Lower leg skin (tissue), 4 donors: ENCODE measurements at regions of chr2 and their contacts with region 1.

Region 1: GRCh38 chr2:28751252-28751955 is at the start of gene PPP1CB:
- DNase-seq: peak; percentile 94 to 99
- H3K4me3 ChIP-seq: peak within 1 kb of the TSS; percentile 99
- CTCF ChIP-seq: peak in 1 of 3 donors; percentile 23
- POLR2A ChIP-seq: no peak
- total RNA-seq, gene PPP1CB: 99.9 to 151 (median 119) TPM

Region 2: DNA sequence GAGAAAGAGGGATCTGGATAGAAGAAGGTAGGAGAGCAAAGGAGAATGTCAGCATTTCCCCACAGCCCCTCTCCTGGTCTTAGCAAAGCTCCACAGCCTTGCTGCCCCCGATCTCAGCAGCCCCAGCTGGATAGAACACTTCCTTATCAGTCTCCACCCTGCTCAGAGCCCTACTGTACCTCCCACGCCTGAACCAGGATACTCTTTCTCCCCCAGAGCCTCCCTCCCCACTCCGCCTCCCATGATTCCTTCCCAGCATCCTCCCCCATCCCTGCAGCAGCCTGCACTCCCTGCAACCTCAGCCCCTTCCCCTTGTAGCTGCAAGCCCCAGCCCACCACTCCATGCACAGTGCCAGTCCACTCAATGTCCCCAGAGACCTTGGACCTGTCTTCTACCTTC is 229.7 kb before region 1 on chr2:
- intact Hi-C with region 1: no loop called
- DNase-seq: peak in 1 of 2 donors; percentile 46
- H3K4me3 ChIP-seq: no peak overlapping the region
- CTCF ChIP-seq: no peak
- POLR2A ChIP-seq: no peak

Region 3: DNA sequence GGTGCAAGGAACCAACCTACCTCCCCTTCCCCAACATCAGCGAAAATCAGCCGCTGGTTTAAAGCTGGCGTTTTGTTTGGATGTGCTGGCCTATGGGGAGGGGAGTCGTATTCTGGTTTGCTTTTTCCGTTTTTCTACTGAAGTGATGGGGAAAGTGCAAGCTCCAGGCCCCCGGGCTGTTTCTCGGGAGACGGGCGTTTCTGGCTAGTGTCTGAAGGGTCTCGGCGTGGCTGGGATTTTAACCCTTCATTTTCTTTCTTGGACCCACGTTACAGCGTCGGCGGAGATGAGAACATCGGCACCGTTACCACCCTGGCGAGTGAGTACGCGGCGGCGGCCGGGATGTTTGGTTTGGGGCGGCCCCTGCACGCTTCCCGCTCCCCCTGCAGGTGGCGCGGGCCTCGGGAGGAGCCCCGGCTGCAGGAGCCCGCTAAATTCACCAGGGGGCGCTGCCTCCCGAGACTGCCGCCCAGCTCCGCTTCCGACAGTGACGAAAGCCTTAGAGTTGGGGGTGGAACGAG is 184.8 kb before region 1 on chr2:
- intact Hi-C with region 1: loop called (anchors 2 kb)
- DNase-seq: peak; percentile 77 to 97
- H3K4me3 ChIP-seq: peak overlapping the region; percentile 25
- CTCF ChIP-seq: peak in 2 of 3 donors; percentile 61 to 98
- POLR2A ChIP-seq: no peak

Region 4: DNA sequence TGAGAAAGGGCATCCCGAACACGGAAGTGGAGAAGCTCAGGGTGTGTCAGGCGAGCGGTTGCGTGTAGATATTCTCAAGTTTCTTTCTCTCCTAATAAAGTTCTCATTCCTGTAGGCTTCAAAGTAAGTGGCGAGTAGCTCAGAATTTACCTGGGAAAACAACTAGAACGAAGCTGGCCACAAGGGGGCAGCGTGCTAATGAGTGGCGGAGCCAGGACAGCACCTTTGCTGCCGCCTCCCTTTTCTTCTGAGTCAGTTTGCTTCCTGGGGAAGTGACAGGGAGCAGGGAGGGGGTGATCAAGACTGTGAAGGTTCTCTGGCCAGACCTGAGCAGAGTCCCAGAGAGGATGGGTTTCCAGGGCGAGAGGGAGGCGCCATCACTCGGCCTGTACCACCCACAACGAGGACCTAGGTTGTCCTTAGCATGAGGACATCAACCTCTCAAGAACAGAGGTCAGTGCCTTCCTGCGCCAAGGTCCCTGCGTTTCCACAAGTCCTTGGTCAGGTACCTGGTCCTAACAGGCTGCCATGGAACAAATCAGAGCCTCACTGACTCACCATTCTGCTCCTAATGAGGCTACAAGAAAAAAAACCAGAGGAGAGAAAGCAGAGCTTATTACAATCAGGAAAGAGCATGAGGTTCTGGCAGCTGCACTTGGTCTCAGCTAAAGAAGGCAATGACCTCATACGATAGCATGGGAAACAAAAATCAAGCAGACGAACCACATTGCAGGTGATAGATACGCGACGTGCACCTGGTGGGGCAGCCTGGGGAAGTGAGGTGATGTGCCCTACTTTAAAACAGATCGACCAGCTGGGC is 156.9 kb before region 1 on chr2:
- intact Hi-C with region 1: loop called (anchors 10 kb)
- DNase-seq: peak; percentile 91 to 98
- H3K4me3 ChIP-seq: no peak overlapping the region
- CTCF ChIP-seq: peak in 1 of 3 donors; percentile 62
- POLR2A ChIP-seq: no peak

Region 5: GRCh38 chr2:28894470-28895177 is 143.2 kb after region 1 on chr2 and contains the start of gene WDR43:
- intact Hi-C with region 1: no loop called
- DNase-seq: peak; percentile 96 to 99
- H3K4me3 ChIP-seq: peak within 1 kb of the TSS; percentile 96
- CTCF ChIP-seq: no peak
- POLR2A ChIP-seq: peak in 1 of 2 donors; percentile 22
- total RNA-seq, gene WDR43: 40.8 to 65.5 (median 43.2) TPM